BJ (cell line): ENCODE measurements at regions of chr10 and their contacts with region 1.

Region 1: GRCh38 chr10:17375936-17376584 is 78.3 kb downstream of the ST8SIA6 start:
- DNase-seq: no peak
- H3K4me3 ChIP-seq: no peak overlapping the region
- H3K27me3 ChIP-seq: no peaks in the 10 kb centered on the region; the same call in 1 of the 2 replicates
- CTCF ChIP-seq: peak; percentile 52

Region 2: GRCh38 chr10:17365402-17365801 is 10.7 kb before region 1 on chr10:
- CTCF ChIA-PET with region 1: interaction called, 11 read pairs
- POLR2A ChIA-PET with region 1: no interaction called
- DNase-seq: no peak
- H3K4me3 ChIP-seq: no peak overlapping the region
- H3K27me3 ChIP-seq: 0 out of 2 replicates have a peak, but pooled peaks cover 2% of the 10 kb centered on the region
- CTCF ChIP-seq: no peak